Ovary (tissue), 10 donors: ENCODE measurements at regions of chr19 and their contacts with region 1.

Region 1: DNA sequence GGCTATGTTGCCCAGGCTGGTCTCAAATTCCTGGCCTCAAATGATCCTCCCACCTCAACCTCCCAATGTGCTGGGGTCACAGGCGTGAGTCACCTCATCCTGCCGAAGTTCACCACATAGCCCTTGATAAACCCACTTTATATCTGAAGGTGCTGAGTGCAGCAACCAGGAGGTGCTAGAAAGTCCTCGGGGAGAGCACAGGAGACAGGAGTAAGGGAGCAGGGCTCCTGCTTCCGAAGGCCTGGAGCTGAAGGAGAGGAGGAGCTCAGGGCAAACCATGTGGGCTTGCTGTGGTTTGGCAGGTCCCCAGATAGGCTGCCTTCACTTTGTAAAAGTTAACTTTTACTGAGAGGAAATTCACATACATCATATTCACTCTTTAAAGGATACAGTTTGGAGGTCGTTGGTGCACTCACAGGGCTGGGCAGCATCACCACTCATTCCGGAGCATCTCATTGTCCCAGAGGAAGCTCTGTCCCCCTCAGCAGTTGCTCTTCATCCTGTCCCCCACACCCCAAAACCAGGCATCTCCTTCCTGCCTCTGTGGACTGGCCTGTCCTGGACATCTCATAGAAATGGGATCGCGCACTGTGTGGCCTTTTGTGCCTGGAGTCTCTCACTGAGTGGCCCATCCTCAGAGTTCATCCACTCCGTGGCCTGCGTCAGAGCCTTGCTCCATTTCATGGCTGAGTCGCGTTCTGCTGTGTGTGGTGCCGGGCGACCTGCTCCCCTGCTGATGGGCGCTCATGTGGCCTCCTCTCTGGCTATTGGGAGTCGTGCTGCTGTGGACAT is 49.5 kb downstream of the KDM4B start:
- DNase-seq: no peak
- H3K4me3 ChIP-seq: no peak overlapping the region
- H3K27ac ChIP-seq: no peak overlapping the region
- H3K4me1 ChIP-seq: peaks cover 8% of the 10 kb centered on the region
- H3K27me3 ChIP-seq: no peaks in the 10 kb centered on the region
- CTCF ChIP-seq: no peak
- EP300 ChIP-seq: no peak
- POLR2A ChIP-seq: no peak

Region 2: GRCh38 chr19:4676955-4677731 is 341.3 kb before region 1 on chr19:
- intact Hi-C with region 1: no loop called
- DNase-seq: no peak
- H3K4me3 ChIP-seq: no peak overlapping the region
- H3K27ac ChIP-seq: no peak overlapping the region
- H3K4me1 ChIP-seq: no peaks in the 10 kb centered on the region
- H3K27me3 ChIP-seq: no peaks in the 10 kb centered on the region
- CTCF ChIP-seq: no peak
- EP300 ChIP-seq: no peak
- POLR2A ChIP-seq: no peak

Region 3: GRCh38 chr19:4896372-4896771 is 122.0 kb before region 1 on chr19:
- intact Hi-C with region 1: no loop called
- DNase-seq: peak in 1 of 5 donors; percentile 30
- H3K4me3 ChIP-seq: no peak overlapping the region
- H3K27ac ChIP-seq: no peak overlapping the region
- H3K4me1 ChIP-seq: no peaks in the 10 kb centered on the region
- H3K27me3 ChIP-seq: no peaks in the 10 kb centered on the region
- CTCF ChIP-seq: no peak
- EP300 ChIP-seq: no peak
- POLR2A ChIP-seq: no peak

Region 4: GRCh38 chr19:4968462-4969291 is 49.7 kb before region 1 on chr19 and contains the start of gene KDM4B:
- intact Hi-C with region 1: loop called in 1 of 4 experiments (anchors 2 kb)
- DNase-seq: peak; percentile 99 to 100 (median 99)
- H3K4me3 ChIP-seq: peak within 1 kb of the TSS; percentile 71
- H3K27ac ChIP-seq: peak within 1 kb of the TSS; percentile 33 to 51
- H3K4me1 ChIP-seq: peaks cover 9% of the 10 kb centered on the region
- H3K27me3 ChIP-seq: no peaks in the 10 kb centered on the region
- CTCF ChIP-seq: no peak
- EP300 ChIP-seq: no peak
- POLR2A ChIP-seq: peak; percentile 87
- total RNA-seq, gene KDM4B: 21.6 to 62.9 (median 47.8) TPM

Region 5: DNA sequence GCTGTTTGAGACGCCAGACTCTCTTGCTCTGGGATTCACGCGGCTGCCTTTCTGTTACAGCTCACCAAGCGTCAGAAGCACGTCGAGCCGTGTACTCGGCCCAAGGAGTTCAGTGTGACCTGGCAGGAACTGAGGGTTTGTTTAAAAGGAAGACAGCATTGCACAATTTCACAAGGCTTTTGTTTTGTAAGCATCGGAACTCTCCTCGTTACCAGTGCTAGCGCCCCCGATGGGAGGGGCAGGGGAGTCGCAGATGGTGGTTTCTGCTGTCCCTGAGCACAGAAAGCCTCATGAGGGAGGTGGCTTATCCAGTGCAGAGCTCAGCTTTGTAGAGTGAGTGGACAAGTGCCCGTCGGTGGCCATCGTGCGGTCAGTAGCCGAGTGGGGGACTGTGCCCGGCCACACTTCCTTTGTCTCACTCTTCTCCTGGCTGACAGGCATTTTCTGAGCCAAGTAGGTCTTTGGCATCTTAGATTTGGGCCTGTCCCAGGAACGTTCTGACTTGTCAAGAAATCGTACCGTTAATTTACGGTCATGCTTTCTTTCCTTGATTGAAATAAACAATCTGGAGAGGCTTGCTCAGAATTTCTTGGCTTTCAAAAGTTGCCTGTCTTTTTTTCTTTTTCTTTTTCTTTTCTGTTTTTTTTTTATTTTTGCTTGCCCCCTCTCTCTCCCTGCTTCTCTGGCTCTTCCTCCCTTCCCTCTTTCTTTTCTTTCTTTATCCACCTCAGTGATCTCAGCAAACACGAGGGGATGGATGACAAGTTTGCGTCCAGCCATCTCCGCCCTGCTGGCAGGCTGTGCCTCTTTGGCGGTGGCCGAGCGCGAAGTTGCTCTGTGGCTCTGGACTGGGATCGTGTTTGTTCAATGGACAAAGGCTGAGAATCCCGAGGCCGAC is 41.8 kb before region 1 on chr19:
- intact Hi-C with region 1: loop called in 1 of 4 experiments (anchors 5 kb)
- DNase-seq: peak; percentile 82 to 93 (median 88)
- H3K4me3 ChIP-seq: peak overlapping the region; percentile 18
- H3K27ac ChIP-seq: peak overlapping the region; percentile 60 to 82
- H3K4me1 ChIP-seq: peaks cover 30% of the 10 kb centered on the region
- H3K27me3 ChIP-seq: no peaks in the 10 kb centered on the region
- CTCF ChIP-seq: peak; percentile 54 to 76 (median 67)
- EP300 ChIP-seq: peak; percentile 42
- POLR2A ChIP-seq: peak; percentile 75

Region 6: GRCh38 chr19:4988770-4989251 is 29.6 kb before region 1 on chr19:
- intact Hi-C with region 1: loop called in 2 of 4 experiments (anchors 5 kb)
- DNase-seq: peak in 4 of 5 donors; percentile 66 to 74 (median 68)
- H3K4me3 ChIP-seq: no peak overlapping the region
- H3K27ac ChIP-seq: no peak overlapping the region
- H3K4me1 ChIP-seq: peaks cover 24% of the 10 kb centered on the region
- H3K27me3 ChIP-seq: no peaks in the 10 kb centered on the region
- CTCF ChIP-seq: no peak
- EP300 ChIP-seq: no peak
- POLR2A ChIP-seq: no peak

Region 7: GRCh38 chr19:6906559-6907060 is 1888.2 kb after region 1 on chr19:
- intact Hi-C with region 1: no loop called
- DNase-seq: no peak
- H3K4me3 ChIP-seq: no peak overlapping the region
- H3K27ac ChIP-seq: no peak overlapping the region
- H3K4me1 ChIP-seq: no peaks in the 10 kb centered on the region
- H3K27me3 ChIP-seq: no peaks in the 10 kb centered on the region
- CTCF ChIP-seq: no peak
- EP300 ChIP-seq: no peak
- POLR2A ChIP-seq: no peak